Prostate gland (tissue), 2 donors: ENCODE measurements at regions of chr17 and their contacts with region 1.

Region 1: GRCh38 chr17:42517516-42517915 is 18.5 kb upstream of the NAGLU start:
- DNase-seq: peak; percentile 77
- H3K4me3 ChIP-seq: no peak overlapping the region
- H3K27ac ChIP-seq: peak overlapping the region; percentile 87 to 93
- H3K4me1 ChIP-seq: peaks cover 8% of the 10 kb centered on the region
- H3K27me3 ChIP-seq: no peaks in the 10 kb centered on the region
- CTCF ChIP-seq: peak; percentile 82 to 96 (median 92)
- POLR2A ChIP-seq: no peak

Region 2: GRCh38 chr17:42312285-42313130 is 205.0 kb before region 1 on chr17:
- intact Hi-C with region 1: loop called (anchors 5 kb)
- DNase-seq: peak; percentile 78
- H3K4me3 ChIP-seq: peak overlapping the region in 1 of 2 donors; percentile 5
- H3K27ac ChIP-seq: peak overlapping the region; percentile 71 to 81
- H3K4me1 ChIP-seq: peaks cover 7% of the 10 kb centered on the region
- H3K27me3 ChIP-seq: no peaks in the 10 kb centered on the region
- CTCF ChIP-seq: peak; percentile 24 to 75 (median 64)
- POLR2A ChIP-seq: no peak

Region 3: GRCh38 chr17:42322382-42323267 is 194.9 kb before region 1 on chr17:
- intact Hi-C with region 1: loop called (anchors 5 kb)
- DNase-seq: peak; percentile 95
- H3K4me3 ChIP-seq: no peak overlapping the region
- H3K27ac ChIP-seq: peak overlapping the region in 1 of 2 donors; percentile 64
- H3K4me1 ChIP-seq: no peaks in the 10 kb centered on the region
- H3K27me3 ChIP-seq: no peaks in the 10 kb centered on the region
- CTCF ChIP-seq: peak; percentile 98 to 100 (median 100)
- POLR2A ChIP-seq: no peak

Region 4: GRCh38 chr17:42405963-42406495 is 111.5 kb before region 1 on chr17:
- intact Hi-C with region 1: loop called (anchors 2 kb)
- DNase-seq: peak; percentile 74
- H3K4me3 ChIP-seq: no peak overlapping the region
- H3K27ac ChIP-seq: peak overlapping the region; percentile 76 to 77
- H3K4me1 ChIP-seq: peaks cover 18% of the 10 kb centered on the region
- H3K27me3 ChIP-seq: no peaks in the 10 kb centered on the region
- CTCF ChIP-seq: peak; percentile 75 to 94 (median 85)
- POLR2A ChIP-seq: no peak

Region 5: DNA sequence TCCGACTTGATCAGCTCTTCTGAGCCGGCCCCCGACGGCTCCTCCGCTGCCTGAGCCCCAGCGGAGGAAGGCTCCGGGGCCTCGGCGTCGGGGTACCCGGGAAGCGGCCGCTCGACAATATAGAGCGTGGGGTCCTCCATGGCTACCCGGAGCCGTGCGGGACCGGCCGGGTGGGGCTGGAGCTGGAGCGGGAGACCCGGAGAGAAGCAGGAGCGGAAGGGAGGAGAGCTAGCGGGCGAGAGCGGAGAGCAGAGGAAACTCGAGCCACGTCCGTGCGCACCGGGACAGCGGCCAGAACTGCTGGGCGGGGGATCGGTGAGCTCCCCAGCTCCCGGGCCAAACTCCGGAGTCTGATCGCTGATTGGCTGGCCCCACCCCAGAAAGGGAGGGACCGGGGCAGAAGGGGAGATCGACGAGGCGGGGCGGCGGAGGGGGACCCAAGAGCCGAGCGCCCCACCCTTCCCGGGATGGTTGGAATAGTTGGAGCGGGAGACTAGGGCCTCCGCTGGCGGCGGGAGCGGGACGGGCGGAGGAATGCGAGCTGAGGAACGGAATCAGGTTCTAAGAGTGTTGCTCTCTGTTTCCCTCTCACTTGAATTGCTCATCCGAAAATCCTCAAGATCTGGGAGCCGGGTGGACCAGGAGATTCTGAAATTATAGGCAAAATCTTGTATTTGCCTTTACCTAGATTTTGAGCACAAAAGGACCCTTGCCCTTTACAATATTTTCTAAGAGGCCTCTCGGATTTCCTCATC is 94.4 kb before region 1 on chr17 and contains the start of gene CAVIN1:
- intact Hi-C with region 1: loop called (anchors 2 kb)
- DNase-seq: peak; percentile 99
- H3K4me3 ChIP-seq: peak within 1 kb of the TSS; percentile 93 to 96
- H3K27ac ChIP-seq: peak within 1 kb of the TSS; percentile 93 to 95
- H3K4me1 ChIP-seq: no peaks in the 10 kb centered on the region
- H3K27me3 ChIP-seq: no peaks in the 10 kb centered on the region
- CTCF ChIP-seq: peak in 1 of 4 experiments; percentile 16
- POLR2A ChIP-seq: peak; percentile 84
- total RNA-seq, gene CAVIN1: 214 to 220 TPM

Region 6: GRCh38 chr17:42459256-42459800 is 58.2 kb before region 1 on chr17:
- intact Hi-C with region 1: loop called (anchors 2 kb)
- DNase-seq: peak; percentile 53
- H3K4me3 ChIP-seq: peak overlapping the region; percentile 57 to 61
- H3K27ac ChIP-seq: peak overlapping the region; percentile 94 to 98
- H3K4me1 ChIP-seq: no peaks in the 10 kb centered on the region
- H3K27me3 ChIP-seq: no peaks in the 10 kb centered on the region
- CTCF ChIP-seq: peak in 2 of 4 experiments; percentile 21 to 49
- POLR2A ChIP-seq: no peak

Region 7: GRCh38 chr17:42554250-42555121 is 37.0 kb after region 1 on chr17:
- intact Hi-C with region 1: no loop called
- DNase-seq: peak; percentile 78
- H3K4me3 ChIP-seq: peak overlapping the region; percentile 62 to 82
- H3K27ac ChIP-seq: peak overlapping the region; percentile 80 to 84
- H3K4me1 ChIP-seq: peaks cover 5% of the 10 kb centered on the region
- H3K27me3 ChIP-seq: no peaks in the 10 kb centered on the region
- CTCF ChIP-seq: peak in 2 of 4 experiments; percentile 10 to 18
- POLR2A ChIP-seq: peak; percentile 75